ENCODE measurements at regions of chr17 and their contacts with region 1.

Region 1: DNA sequence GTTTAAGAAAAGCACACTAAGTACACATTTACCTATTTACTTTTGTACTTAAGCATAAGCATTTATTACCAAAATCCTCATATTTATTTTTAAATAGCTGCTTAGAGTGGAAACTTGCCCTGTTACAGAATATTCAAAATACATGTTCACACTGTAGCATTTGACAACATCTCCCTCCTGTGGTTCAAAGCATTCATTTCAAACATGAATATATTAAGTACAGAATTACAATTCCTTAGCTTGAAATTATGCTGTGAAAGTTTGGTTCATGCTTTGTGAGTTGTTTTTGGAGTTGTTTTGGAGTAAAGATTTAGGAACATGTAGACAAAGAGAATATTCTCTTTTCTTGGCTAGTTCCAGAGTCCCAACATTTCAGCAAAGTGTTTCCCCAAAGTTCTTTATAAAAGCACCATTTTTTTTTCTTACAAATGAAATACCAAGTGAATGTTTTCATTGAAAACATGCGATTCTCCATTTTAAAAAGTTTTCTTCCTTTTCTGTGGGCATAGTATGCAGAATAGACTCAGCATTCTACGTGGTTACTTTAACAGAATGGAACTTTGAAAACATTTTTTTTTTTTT is 33.2 kb downstream of the TUBD1 start:
- DNase-seq: no peak
- H3K4me3 ChIP-seq: no peak overlapping the region
- H3K27ac ChIP-seq: peak overlapping the region; percentile 98
- H3K4me1 ChIP-seq: peaks cover 48% of the 10 kb centered on the region
- H3K27me3 ChIP-seq: no peaks in the 10 kb centered on the region
- CTCF ChIP-seq: peak; percentile 90

Region 2: DNA sequence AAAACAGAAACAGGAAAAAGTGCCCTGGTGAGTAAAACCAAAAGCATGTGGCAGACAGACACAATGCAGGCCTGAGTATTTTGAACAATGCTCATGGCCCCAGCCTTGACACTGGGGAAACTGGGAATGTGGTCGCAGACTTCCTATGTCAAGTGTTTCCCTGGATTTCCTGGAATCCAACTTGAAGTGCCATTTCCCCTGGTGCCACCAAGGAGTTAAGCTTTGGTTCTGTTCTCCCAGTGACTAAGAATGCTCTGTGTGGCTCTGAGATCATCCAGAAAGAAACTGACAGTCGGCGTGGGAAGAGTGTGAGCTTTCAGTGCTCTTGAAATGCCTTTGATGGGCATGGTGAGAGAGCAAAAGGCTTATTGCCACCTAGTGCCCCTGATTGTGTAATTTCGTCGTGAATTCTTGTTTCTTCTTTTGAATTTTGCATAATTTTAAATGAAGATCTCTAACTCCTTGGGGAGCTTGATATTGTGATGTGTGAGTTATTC is 432.1 kb before region 1 on chr17:
- CTCF ChIA-PET with region 1: no interaction called
- POLR2A ChIA-PET with region 1: no interaction called
- intact Hi-C with region 1: no loop called
- DNase-seq: no peak
- H3K4me3 ChIP-seq: no peak overlapping the region
- H3K27ac ChIP-seq: peak overlapping the region; percentile 27; the same call in 1 of the 2 replicates
- H3K4me1 ChIP-seq: peaks cover 27% of the 10 kb centered on the region
- H3K27me3 ChIP-seq: no peaks in the 10 kb centered on the region
- CTCF ChIP-seq: no peak

Region 3: DNA sequence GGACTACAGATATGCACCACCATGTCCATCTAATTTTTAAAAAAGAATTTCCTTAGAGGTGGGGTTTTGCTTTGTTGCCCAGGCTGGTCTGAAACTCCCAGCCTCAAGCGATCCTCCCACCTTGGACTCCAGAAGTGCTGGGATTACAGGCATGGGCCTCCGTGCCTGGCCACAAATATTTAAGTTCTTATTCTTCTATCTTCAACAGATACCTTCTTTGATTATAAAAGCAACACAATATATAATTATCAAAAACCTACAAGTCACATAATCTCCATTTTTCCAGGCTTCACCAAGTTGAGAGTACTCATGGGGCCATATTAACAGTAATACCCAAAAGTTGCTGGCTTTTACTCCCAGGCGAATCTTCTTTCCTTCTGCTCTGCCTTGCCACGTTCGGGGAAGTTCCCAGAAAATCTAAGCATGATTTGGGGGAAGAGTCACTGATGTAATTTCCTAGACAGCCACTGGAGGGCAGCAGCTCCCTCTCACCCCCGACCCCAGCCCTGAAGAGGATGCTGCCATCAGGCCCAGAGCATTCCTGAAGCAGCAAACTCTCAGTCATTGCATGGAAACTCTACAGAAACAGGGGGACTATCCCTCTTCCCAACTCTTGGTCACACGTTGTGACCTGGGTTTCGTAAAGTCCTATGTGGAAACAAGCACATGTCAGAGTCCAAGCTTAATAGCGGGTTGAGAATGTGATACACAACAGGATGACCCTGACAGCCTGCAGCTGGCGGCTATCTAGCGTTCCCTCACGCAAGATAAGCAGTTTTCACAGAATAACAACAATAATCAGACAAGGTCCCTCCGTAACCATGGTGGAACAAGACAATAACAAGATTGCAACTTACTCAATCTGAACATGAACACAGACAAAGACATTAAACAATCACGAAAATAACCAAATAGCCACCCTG is 338.1 kb before region 1 on chr17:
- CTCF ChIA-PET with region 1: no interaction called
- POLR2A ChIA-PET with region 1: interaction called, 13 read pairs
- intact Hi-C with region 1: no loop called
- DNase-seq: peak in 1 of 2 experiments; percentile 59
- H3K4me3 ChIP-seq: no peak overlapping the region
- H3K27ac ChIP-seq: no peak overlapping the region
- H3K4me1 ChIP-seq: peaks cover 5% of the 10 kb centered on the region; the same call in 1 of the 2 replicates
- H3K27me3 ChIP-seq: no peaks in the 10 kb centered on the region
- CTCF ChIP-seq: peak; percentile 97

Region 4: GRCh38 chr17:59725691-59726090 is 133.8 kb before region 1 on chr17:
- CTCF ChIA-PET with region 1: interaction called, 12 read pairs
- POLR2A ChIA-PET with region 1: no interaction called
- intact Hi-C with region 1: no loop called
- DNase-seq: peak in 1 of 2 experiments; percentile 49
- H3K4me3 ChIP-seq: no peak overlapping the region
- H3K27ac ChIP-seq: peak overlapping the region; percentile 36
- H3K4me1 ChIP-seq: peaks cover 20% of the 10 kb centered on the region
- H3K27me3 ChIP-seq: no peaks in the 10 kb centered on the region
- CTCF ChIP-seq: no peak

Region 5: DNA sequence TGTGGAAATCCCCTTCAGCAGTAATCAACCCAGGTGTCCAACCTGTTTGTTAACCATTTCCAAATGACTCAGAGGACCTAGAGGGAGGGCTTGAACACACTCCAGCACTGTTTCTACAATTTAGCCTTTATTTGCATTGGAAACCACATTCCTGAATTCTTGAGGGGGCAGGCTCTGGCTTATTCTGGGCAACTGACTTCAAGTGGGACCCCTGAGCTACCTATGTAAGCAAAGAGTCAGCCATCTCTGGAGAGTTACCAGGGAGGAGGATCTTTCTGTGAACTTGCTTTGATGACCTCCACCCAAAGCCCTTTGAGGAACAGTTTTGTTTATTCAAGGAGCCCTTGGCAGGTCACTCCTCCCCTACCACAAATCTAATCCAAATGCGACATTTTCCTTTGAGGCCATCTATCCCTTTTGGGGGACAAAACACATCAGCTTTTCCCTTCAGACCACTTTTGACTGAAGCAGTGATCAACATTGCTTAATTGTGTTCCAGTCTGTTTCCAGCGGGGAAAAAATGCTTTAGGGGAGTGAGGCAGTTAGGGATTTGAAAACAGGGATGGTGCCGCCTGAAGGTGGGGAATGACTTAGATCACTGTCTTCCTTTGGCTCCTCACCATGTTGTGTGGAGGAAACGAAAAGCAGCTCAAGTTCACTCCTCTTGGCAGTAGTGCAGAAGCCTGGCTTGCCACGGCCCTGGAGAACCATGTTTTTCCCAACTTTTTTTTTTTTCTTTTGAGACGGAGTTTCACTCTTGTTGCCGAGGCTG is 13.0 kb before region 1 on chr17:
- CTCF ChIA-PET with region 1: interaction called, 6 read pairs
- POLR2A ChIA-PET with region 1: interaction called, 33 read pairs
- intact Hi-C with region 1: loop called (anchors 2 kb)
- DNase-seq: peak; percentile 75 to 100
- H3K4me3 ChIP-seq: peak overlapping the region; percentile 46; the same call in 1 of the 2 replicates
- H3K27ac ChIP-seq: peak overlapping the region; percentile 99
- H3K4me1 ChIP-seq: peaks cover 76% of the 10 kb centered on the region
- H3K27me3 ChIP-seq: no peaks in the 10 kb centered on the region
- CTCF ChIP-seq: no peak

Region 6: DNA sequence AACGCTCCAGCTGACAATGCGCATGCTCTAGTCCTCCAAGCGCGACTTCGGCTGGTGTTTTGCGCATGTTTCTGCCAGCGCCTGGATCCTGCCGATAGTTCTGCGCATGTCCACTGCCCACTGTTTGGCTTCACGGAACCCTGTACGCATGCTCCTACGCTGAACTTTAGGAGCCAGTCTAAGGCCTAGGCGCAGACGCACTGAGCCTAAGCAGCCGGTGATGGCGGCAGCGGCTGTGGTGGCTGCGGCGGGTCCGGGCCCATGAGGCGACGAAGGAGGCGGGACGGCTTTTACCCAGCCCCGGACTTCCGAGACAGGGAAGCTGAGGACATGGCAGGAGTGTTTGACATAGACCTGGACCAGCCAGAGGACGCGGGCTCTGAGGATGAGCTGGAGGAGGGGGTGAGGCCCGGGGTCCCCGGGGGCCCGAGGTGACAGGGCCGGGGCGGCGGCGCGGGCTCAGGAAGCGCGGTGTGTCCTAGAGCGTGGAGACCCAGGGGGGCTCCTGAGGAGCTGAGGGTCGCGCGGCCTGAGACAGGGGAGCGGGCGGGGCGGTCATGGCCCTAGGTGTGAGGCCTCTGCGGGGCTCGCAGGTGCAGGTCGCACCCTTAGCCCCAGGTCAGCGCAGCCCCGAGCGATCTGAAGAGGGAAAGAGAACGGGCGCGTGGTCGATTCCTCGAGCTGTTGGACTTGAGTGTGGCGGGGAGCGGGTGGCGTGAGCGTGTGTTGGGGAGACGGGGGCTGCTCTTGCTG is 33.6 kb after region 1 on chr17 and contains the starts of genes RPS6KB1 and TUBD1:
- CTCF ChIA-PET with region 1: interaction called, 15 read pairs
- POLR2A ChIA-PET with region 1: no interaction called
- intact Hi-C with region 1: no loop called
- DNase-seq: peak; percentile 96 to 97
- H3K4me3 ChIP-seq: peak within 1 kb of the TSS; percentile 75
- H3K27ac ChIP-seq: peak within 1 kb of the TSS; percentile 40
- H3K4me1 ChIP-seq: peaks cover 24% of the 10 kb centered on the region
- H3K27me3 ChIP-seq: no peaks in the 10 kb centered on the region
- CTCF ChIP-seq: peak; percentile 19; the same call in 1 of the 2 replicates
- total RNA-seq, gene RPS6KB1: 31.4 and 41.8 TPM in 2 replicates
- total RNA-seq, gene TUBD1: 11.8 and 13.5 TPM in 2 replicates